ENCODE measurements at regions of chrX and their contacts with region 1.

Region 1: GRCh38 chrX:108439434-108439883 is at the start of gene COL4A5:
- DNase-seq: peak; percentile 84
- ATAC-seq: peak; percentile 80
- H3K4me3 ChIP-seq: peak within 1 kb of the TSS; percentile 69 to 77 (median 72)
- H3K27ac ChIP-seq: peak within 1 kb of the TSS; percentile 69
- H3K4me1 ChIP-seq: peaks cover 17% of the 10 kb centered on the region; the same call in 1 of the 2 replicates
- H3K27me3 ChIP-seq: no peaks in the 10 kb centered on the region; a peak in 1 of 5 replicates
- CTCF ChIP-seq: no peak
- EP300 ChIP-seq: no peak
- POLR2A ChIP-seq: no peak
- RAD21 ChIP-seq: no peak
- total RNA-seq, gene COL4A5: 11.9 and 39.5 TPM in 2 replicates

Region 2: GRCh38 chrX:108245459-108245858 is 194.0 kb before region 1 on chrX:
- CTCF ChIA-PET with region 1: no interaction called
- POLR2A ChIA-PET with region 1: no interaction called
- in situ Hi-C with region 1: no loop called
- intact Hi-C with region 1: loop called (anchors 10 kb)
- DNase-seq: no peak
- ATAC-seq: peak; percentile 59
- H3K4me3 ChIP-seq: no peak overlapping the region
- H3K27ac ChIP-seq: peak overlapping the region; percentile 17
- H3K4me1 ChIP-seq: peaks cover 62% of the 10 kb centered on the region
- H3K27me3 ChIP-seq: no peaks in the 10 kb centered on the region
- CTCF ChIP-seq: peak; percentile 27; the same call in 1 of the 2 replicates
- EP300 ChIP-seq: no peak
- POLR2A ChIP-seq: no peak
- RAD21 ChIP-seq: no peak

Region 3: GRCh38 chrX:108304210-108304609 is 135.2 kb before region 1 on chrX:
- CTCF ChIA-PET with region 1: no interaction called
- POLR2A ChIA-PET with region 1: interaction called, 4 read pairs
- in situ Hi-C with region 1: no loop called
- intact Hi-C with region 1: loop called (anchors 5 kb)
- DNase-seq: no peak
- ATAC-seq: no peak
- H3K4me3 ChIP-seq: no peak overlapping the region
- H3K27ac ChIP-seq: no peak overlapping the region
- H3K4me1 ChIP-seq: peaks cover 46% of the 10 kb centered on the region
- H3K27me3 ChIP-seq: no peaks in the 10 kb centered on the region
- CTCF ChIP-seq: peak; percentile 62
- EP300 ChIP-seq: no peak
- POLR2A ChIP-seq: no peak
- RAD21 ChIP-seq: no peak

Region 4: GRCh38 chrX:108516184-108516583 is 76.7 kb after region 1 on chrX:
- CTCF ChIA-PET with region 1: no interaction called
- POLR2A ChIA-PET with region 1: interaction called, 3 read pairs
- in situ Hi-C with region 1: no loop called
- intact Hi-C with region 1: loop called (anchors 5 kb)
- DNase-seq: peak; percentile 89
- ATAC-seq: peak; percentile 99
- H3K4me3 ChIP-seq: no peak overlapping the region; a peak in 1 of 6 replicates
- H3K27ac ChIP-seq: peak overlapping the region; percentile 79
- H3K4me1 ChIP-seq: peaks cover 43% of the 10 kb centered on the region
- H3K27me3 ChIP-seq: no peaks in the 10 kb centered on the region
- CTCF ChIP-seq: no peak
- EP300 ChIP-seq: peak in 1 of 2 experiments; percentile 93; a peak in 2 of 4 replicates
- POLR2A ChIP-seq: no peak
- RAD21 ChIP-seq: no peak

Region 5: DNA sequence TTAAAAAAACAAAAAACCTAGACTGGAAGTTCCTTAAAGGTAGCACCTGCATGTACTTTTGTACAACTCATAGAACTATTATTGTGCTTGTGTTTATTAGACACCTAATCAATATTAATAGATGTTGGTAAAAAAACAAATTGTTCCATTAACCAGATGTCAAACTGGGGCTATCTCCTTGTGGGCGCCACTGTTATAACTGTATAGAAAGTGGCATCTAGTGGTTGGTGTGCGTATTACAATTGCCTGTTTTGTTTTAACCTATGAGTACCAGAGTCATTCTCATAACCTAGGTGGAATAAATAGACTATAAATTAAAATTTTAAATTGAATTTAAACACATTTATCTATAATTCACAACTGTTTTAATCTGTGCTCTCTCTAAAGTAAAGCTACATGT is 97.5 kb after region 1 on chrX:
- CTCF ChIA-PET with region 1: no interaction called
- POLR2A ChIA-PET with region 1: no interaction called
- in situ Hi-C with region 1: no loop called
- intact Hi-C with region 1: loop called (anchors 5 kb)
- DNase-seq: peak; percentile 22
- ATAC-seq: no peak
- H3K4me3 ChIP-seq: no peak overlapping the region
- H3K27ac ChIP-seq: no peak overlapping the region
- H3K4me1 ChIP-seq: no peaks in the 10 kb centered on the region
- H3K27me3 ChIP-seq: no peaks in the 10 kb centered on the region
- CTCF ChIP-seq: peak; percentile 62
- EP300 ChIP-seq: no peak
- POLR2A ChIP-seq: no peak
- RAD21 ChIP-seq: peak; percentile 40

Measured in HepG2 (cell line).